Gastrocnemius medialis (tissue), 4 donors: ENCODE measurements at regions of chr3 and their contacts with region 1.

Region 1: GRCh38 chr3:157913741-157914150 is 192.5 kb downstream of the SHOX2 start:
- DNase-seq: no peak
- ATAC-seq: peak; percentile 63 to 89
- H3K4me3 ChIP-seq: no peak overlapping the region
- H3K27ac ChIP-seq: peak overlapping the region in 3 of 4 donors; percentile 47 to 66 (median 54)
- H3K4me1 ChIP-seq: no peaks in the 10 kb centered on the region
- H3K27me3 ChIP-seq: no peaks in the 10 kb centered on the region
- CTCF ChIP-seq: no peak
- POLR2A ChIP-seq: no peak

Region 2: DNA sequence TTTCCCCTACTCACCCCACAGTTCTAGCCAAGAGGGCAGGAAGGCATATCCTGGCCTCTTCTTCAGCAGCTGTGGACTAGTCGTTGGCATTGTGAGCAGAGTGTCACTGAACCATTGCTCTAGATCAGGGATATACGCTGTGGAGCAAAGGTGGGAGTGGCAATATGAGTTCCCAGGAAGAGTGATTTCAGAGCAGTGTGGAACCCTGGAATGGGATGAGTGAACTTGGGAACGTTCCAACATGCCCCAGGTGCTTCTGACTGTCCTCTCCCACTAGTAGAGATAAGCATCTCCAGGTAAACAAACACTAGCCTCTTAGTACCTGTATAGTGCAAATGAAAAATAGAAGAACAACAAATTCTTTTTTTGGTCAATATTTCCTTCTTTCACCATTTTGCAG is 287.0 kb before region 1 on chr3:
- in situ Hi-C with region 1: loop called in 1 of 4 experiments (anchors 10 kb)
- intact Hi-C with region 1: no loop called
- DNase-seq: no peak
- ATAC-seq: no peak
- H3K4me3 ChIP-seq: no peak overlapping the region
- H3K27ac ChIP-seq: no peak overlapping the region
- H3K4me1 ChIP-seq: no peaks in the 10 kb centered on the region
- H3K27me3 ChIP-seq: no peaks in the 10 kb centered on the region
- CTCF ChIP-seq: no peak
- POLR2A ChIP-seq: no peak

Region 3: GRCh38 chr3:157652366-157652765 is 261.4 kb before region 1 on chr3:
- in situ Hi-C with region 1: no loop called
- intact Hi-C with region 1: no loop called
- DNase-seq: no peak
- ATAC-seq: no peak
- H3K4me3 ChIP-seq: no peak overlapping the region
- H3K27ac ChIP-seq: no peak overlapping the region
- H3K4me1 ChIP-seq: no peaks in the 10 kb centered on the region
- H3K27me3 ChIP-seq: no peaks in the 10 kb centered on the region
- CTCF ChIP-seq: no peak
- POLR2A ChIP-seq: no peak

Region 4: GRCh38 chr3:157856078-157856939 is 57.4 kb before region 1 on chr3:
- in situ Hi-C with region 1: no loop called
- intact Hi-C with region 1: loop called (anchors 1 kb)
- DNase-seq: peak; percentile 40 to 56
- ATAC-seq: peak; percentile 93
- H3K4me3 ChIP-seq: no peak overlapping the region
- H3K27ac ChIP-seq: peak overlapping the region; percentile 64 to 78 (median 73)
- H3K4me1 ChIP-seq: peaks cover 9 to 32% of the 10 kb centered on the region in 2 donors
- H3K27me3 ChIP-seq: no peaks in the 10 kb centered on the region
- CTCF ChIP-seq: no peak
- POLR2A ChIP-seq: no peak